Activated B cell treated with CpG ODN at 0.5 μM for 24 hours (primary cell): ENCODE measurements at regions of chr1 and their contacts with region 1.

Region 1: GRCh38 chr1:91282695-91283420 is 121.8 kb downstream of the HFM1 start:
- DNase-seq: no peak
- ATAC-seq: peak; percentile 45
- H3K4me3 Mint-ChIP-seq: no peak overlapping the region
- H3K27ac Mint-ChIP-seq: no peak overlapping the region
- H3K4me1 Mint-ChIP-seq: peaks cover 2% of the 10 kb centered on the region
- H3K27me3 Mint-ChIP-seq: peaks cover 2% of the 10 kb centered on the region
- CTCF ChIP-seq: no peak

Region 2: DNA sequence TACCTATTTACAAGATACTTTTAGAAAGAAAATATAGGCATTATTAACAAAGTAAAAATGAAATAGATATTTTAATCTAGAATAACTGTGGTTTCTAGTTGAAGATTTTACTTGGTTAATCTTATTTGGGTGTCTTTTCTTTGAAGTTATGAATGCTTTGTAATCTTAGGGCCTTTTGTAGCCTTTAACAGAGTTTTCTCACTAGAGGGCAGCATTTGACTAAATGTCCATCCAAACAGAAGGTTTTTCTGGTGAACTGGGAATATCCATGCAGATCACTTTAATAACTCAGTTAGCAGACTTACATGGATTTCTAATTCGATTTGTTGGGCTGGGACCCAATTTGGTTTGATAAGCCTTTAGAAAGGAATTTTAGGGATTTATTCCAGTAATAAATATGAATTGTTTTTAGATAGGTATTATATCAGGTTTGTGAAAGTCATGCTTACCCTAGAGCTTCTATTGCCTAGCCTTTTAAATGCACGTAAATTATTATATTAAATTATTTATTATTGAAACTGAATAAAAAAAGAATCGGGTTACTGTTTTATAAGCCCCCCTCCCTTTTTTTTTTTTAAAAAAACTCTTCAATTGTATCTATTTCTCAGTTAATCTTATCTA is 1168.2 kb before region 1 on chr1:
- CTCF ChIA-PET with region 1: no interaction called
- POLR2A ChIA-PET with region 1: no interaction called
- intact Hi-C with region 1: loop called (anchors 10 kb)
- DNase-seq: no peak
- ATAC-seq: no peak
- H3K4me3 Mint-ChIP-seq: no peak overlapping the region
- H3K27ac Mint-ChIP-seq: no peak overlapping the region
- H3K4me1 Mint-ChIP-seq: no peaks in the 10 kb centered on the region
- H3K27me3 Mint-ChIP-seq: peaks cover 16% of the 10 kb centered on the region
- CTCF ChIP-seq: no peak

Region 3: DNA sequence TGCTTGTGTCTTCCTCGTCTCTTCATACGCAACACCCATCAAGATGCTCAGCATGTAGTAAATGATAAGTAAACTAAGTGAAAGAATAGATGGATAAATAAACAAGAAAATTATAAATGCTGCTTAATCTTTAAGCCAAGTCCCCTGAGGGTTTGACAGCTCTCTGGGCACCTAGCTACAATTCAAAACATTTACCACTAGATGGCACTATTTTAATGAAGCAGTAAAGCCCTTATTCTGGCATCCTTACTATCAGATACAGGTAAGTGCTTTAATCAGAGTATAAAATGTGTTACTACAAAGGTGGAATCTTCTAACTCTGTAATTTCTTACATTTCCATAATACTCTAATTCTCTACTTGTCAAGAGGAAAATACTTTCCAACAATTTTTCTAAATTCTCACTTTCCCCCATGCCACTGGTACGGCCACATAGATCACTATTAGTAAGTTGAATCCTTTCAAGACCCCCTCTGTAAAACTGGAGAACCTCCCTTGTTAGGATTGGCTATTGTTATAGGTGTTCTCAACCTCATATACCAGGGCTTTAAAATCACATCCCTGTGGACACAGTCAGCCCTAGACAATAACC is 703.6 kb before region 1 on chr1:
- CTCF ChIA-PET with region 1: interaction called, 7 read pairs
- POLR2A ChIA-PET with region 1: no interaction called
- intact Hi-C with region 1: loop called (anchors 1 kb)
- DNase-seq: no peak
- ATAC-seq: no peak
- H3K4me3 Mint-ChIP-seq: no peak overlapping the region
- H3K27ac Mint-ChIP-seq: no peak overlapping the region
- H3K4me1 Mint-ChIP-seq: no peaks in the 10 kb centered on the region
- H3K27me3 Mint-ChIP-seq: peaks cover 6% of the 10 kb centered on the region
- CTCF ChIP-seq: peak; percentile 58

Region 4: GRCh38 chr1:90721210-90722194 is 561.4 kb before region 1 on chr1:
- CTCF ChIA-PET with region 1: no interaction called
- POLR2A ChIA-PET with region 1: no interaction called
- intact Hi-C with region 1: loop called (anchors 2 kb)
- DNase-seq: no peak
- ATAC-seq: peak; percentile 40
- H3K4me3 Mint-ChIP-seq: no peak overlapping the region
- H3K27ac Mint-ChIP-seq: no peak overlapping the region
- H3K4me1 Mint-ChIP-seq: peaks cover 36% of the 10 kb centered on the region
- H3K27me3 Mint-ChIP-seq: peaks cover 79% of the 10 kb centered on the region
- CTCF ChIP-seq: no peak

Region 5: DNA sequence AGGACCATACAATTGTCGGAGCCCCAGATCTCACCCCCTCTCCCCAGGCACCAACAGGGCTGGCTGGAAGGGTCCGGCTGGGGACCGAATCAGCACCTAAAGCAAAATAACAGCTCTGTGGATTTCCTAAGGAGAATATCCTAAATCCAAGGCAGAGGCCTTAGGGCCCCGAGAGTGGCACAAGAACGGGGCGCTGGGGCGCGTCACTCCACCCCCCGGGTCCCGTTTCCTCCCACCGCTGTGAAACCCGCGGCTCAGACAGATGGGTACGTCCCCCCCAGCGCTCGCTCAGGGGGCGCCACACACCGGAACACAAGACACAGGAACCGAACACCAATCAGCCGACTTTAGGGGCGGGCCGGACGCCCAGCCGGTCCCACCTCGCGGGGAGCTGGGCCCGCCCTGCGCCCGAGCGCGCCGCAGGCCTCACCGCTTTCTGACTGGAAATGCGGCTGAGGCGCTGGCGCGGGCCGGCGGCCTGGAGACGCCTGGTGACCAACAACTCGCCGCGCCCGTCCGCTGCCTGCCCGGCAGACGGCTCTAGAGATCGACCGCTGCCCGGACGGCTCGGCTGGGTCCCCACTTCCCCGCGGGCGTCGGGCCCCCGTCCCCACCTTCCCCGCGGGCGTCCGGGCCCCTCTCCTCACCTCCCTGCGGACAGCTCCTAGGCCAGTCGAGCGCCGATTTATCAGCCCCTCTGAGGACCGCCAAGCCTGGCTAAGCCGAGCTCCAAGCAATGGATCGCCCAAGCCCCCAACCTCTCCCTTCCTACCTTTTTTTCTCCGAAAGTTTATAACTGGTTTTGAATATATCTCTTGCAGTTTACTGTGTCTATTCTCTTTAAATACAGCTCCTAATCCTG is 121.5 kb after region 1 on chr1 and contains the start of gene HFM1:
- CTCF ChIA-PET with region 1: no interaction called
- POLR2A ChIA-PET with region 1: no interaction called
- intact Hi-C with region 1: loop called (anchors 2 kb)
- DNase-seq: peak; percentile 45
- ATAC-seq: peak; percentile 97
- H3K4me3 Mint-ChIP-seq: peak within 1 kb of the TSS; percentile 80
- H3K27ac Mint-ChIP-seq: no peak within 1 kb of the TSS
- H3K4me1 Mint-ChIP-seq: peaks cover 10% of the 10 kb centered on the region
- H3K27me3 Mint-ChIP-seq: peaks cover 22% of the 10 kb centered on the region
- CTCF ChIP-seq: no peak
- total RNA-seq, gene HFM1: 0.07 and 0.29 TPM in 2 replicates

Region 6: GRCh38 chr1:91924146-91924545 is 641.3 kb after region 1 on chr1:
- CTCF ChIA-PET with region 1: interaction called, 14 read pairs
- POLR2A ChIA-PET with region 1: no interaction called
- intact Hi-C with region 1: loop called (anchors 1 kb)
- DNase-seq: no peak
- ATAC-seq: no peak
- H3K4me3 Mint-ChIP-seq: no peak overlapping the region
- H3K27ac Mint-ChIP-seq: no peak overlapping the region
- H3K4me1 Mint-ChIP-seq: no peaks in the 10 kb centered on the region
- H3K27me3 Mint-ChIP-seq: peaks cover 2% of the 10 kb centered on the region
- CTCF ChIP-seq: no peak

Region 7: DNA sequence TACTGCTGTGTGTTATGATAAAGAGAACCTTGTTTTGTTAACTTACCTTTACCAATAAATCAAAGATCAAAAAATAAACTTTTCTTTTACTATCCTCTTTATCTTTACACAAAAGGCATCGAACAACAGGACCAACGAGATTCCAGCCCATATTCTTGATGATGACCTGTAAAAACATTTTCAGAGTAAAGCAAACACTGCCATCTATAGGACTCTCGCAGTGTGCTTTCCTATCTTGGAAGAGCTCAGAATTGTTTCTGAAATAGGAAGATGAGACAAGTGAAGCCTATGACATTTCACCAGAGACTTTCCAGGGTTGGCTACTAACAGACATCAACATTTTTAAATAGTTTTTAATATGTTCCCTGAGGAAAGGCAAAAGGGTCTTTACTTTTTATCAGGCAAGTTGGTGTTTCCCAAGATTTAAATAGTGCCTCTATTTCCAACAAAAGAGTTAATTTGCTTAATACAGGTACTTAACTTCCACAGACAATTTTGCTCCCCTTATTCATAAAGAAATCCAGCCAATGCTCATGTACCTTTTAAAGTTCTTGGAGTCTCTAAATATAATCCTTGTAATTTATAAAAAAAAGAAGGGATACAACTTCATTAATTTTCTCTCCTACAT is 1008.6 kb after region 1 on chr1:
- CTCF ChIA-PET with region 1: interaction called, 3 read pairs
- POLR2A ChIA-PET with region 1: no interaction called
- intact Hi-C with region 1: loop called (anchors 2 kb)
- DNase-seq: no peak
- ATAC-seq: no peak
- H3K4me3 Mint-ChIP-seq: no peak overlapping the region
- H3K27ac Mint-ChIP-seq: no peak overlapping the region
- H3K4me1 Mint-ChIP-seq: peaks cover 5% of the 10 kb centered on the region
- H3K27me3 Mint-ChIP-seq: no peaks in the 10 kb centered on the region
- CTCF ChIP-seq: no peak